Left ventricle myocardium superior (tissue), 1 donor: ENCODE measurements at regions of chr22 and their contacts with region 1.

Region 1: DNA sequence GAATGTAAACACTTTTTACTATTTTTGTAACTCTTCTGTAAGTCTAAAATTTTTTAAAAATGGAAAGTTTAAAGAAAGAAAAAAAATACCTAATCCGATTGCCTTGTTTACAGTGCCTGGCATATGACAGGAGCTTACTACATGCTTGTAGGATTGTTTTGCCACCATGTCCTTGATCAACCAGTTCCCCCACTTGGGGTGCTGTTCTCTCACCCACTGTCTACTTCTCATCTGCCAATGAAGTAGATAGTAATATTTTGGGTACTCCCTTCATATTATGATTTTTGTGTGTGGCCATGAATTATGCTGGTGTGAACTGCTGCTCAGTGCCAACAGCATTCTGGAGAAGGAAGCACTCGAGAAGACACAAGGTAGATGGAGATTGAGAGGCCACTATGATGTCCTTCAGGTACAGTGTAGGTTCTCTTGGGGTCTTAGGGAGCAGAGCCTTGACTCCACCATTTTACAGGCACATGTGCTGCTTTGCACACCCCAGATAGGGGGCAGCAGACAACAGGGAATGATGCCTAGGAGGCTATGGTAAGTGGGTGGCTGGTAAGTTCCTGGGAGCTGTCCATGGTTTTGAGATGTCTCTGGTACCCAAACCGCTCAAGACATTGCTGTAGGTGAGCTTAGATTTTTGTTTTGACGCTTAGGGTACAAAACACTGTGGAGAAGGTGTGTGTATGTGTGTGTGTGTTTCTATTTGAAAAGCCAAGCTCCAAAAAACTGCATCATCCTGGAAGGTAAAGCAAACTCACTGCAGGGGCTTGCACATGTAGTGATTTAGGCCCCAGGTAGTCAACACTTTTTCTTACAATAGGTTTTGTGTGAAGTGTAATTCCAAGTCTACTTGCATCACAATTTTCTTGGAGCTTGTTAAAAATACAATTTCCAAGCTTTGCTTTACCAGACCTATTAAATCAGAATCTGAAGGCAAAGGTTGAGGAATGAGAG is 494.5 kb upstream of the LARGE1 start:
- DNase-seq: no peak
- ATAC-seq: peak; percentile 43

Region 2: DNA sequence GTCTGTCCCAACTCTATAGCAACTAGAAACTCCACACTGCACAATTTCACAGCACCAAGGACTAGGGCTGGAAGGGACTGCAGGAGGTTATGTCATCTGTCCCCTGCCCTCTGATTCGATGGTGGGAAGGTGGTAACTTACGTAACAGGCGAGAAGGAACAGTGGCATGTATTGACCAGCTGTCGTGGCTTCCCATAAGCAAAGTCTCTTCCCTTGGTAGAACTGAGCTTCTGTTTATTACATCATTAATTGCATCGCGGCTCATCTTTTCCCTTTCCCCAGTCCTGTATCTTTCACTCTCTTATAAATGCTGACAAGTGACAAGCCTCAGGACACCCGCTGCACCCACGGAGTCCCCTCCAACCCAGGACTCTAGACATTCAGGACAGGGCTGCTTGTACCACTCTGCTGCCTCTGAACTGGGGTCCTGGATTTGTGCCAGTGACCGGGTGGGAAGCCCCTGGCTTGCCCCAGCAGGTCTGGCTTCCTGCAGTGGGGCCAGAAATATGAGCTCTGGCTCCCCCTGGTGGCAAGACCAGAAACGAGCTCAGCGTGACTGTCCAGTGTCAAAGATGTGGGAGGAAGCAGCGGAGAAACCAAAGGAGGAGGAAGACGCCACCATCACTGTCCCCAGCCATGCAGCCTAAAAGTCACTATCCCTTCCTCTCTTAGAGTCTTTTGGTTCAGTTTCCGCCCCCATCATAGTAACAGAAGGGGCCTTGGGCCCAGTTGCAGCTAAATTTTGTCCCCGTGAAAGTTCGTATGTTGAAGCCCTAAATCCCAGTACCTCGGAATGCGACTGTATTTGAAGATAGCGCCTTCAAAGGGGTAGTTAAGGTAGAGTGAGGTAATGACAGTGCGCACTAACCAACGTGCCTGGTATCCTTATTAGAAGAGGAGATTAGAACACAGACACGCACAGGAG is 735.7 kb after region 1 on chr22:
- intact Hi-C with region 1: loop called (anchors 10 kb)
- DNase-seq: peak; percentile 72
- ATAC-seq: peak; percentile 76